ENCODE measurements at regions of chr15 and their contacts with region 1.

Region 1: DNA sequence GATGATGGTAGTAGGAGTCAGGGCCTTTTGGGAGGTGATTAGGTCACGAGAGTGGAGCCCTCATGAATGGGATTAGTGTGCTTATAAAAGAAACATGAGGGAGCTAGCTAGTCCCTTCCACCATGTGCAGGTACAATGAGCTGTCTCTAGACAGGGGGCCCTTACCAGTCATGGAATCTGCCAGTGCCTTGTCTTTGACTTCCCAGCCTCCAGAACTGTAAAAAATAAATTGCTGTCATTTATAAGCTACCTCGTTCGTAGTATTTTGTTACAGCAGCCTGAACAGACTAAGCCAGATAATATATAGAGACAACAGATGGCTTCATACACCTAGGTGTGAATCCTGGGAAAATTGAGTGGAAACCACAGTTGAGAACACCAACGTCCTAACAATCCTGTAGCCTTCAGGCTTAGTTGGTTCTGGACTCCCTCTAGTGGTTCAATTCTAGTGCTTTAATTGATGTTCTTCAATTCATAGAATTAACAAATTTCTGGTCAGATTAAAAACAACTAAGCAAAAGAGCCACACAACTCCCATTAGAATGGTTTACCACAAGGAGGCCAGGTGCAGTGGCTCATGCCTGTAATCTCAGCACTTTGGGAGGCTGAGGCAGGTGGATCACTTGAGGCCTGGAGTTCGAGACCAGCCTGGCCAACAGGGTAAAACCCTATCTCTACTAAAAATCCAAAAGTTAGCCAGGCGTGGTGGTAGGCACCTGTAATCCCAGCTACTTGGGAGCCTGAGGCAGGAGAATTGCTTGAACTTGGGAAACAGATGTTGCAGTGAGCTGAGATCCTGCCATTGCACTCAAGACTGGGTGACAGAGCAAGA is 21.3 kb upstream of the GATM start:
- DNase-seq: peak; percentile 89
- ATAC-seq: peak; percentile 13; the same call in 1 of the 2 replicates
- H3K4me3 ChIP-seq: no peak overlapping the region
- H3K27ac ChIP-seq: no peak overlapping the region
- H3K4me1 ChIP-seq: peaks cover 28% of the 10 kb centered on the region
- H3K27me3 ChIP-seq: no peaks in the 10 kb centered on the region
- CTCF ChIP-seq: peak; percentile 82

Region 2: GRCh38 chr15:45205192-45205591 is 194.4 kb before region 1 on chr15:
- CTCF ChIA-PET with region 1: interaction called, 5 read pairs
- POLR2A ChIA-PET with region 1: no interaction called
- intact Hi-C with region 1: loop called (anchors 1 kb)
- DNase-seq: peak; percentile 86
- ATAC-seq: peak; percentile 35
- H3K4me3 ChIP-seq: no peak overlapping the region
- H3K27ac ChIP-seq: no peak overlapping the region
- H3K4me1 ChIP-seq: no peaks in the 10 kb centered on the region
- H3K27me3 ChIP-seq: no peaks in the 10 kb centered on the region
- CTCF ChIP-seq: peak; percentile 94

Region 3: GRCh38 chr15:45307230-45307924 is 92.2 kb before region 1 on chr15:
- CTCF ChIA-PET with region 1: no interaction called
- POLR2A ChIA-PET with region 1: no interaction called
- intact Hi-C with region 1: loop called (anchors 1 kb)
- DNase-seq: peak; percentile 71
- ATAC-seq: peak; percentile 68
- H3K4me3 ChIP-seq: peak overlapping the region; percentile 42
- H3K27ac ChIP-seq: no peak overlapping the region
- H3K4me1 ChIP-seq: peaks cover 9% of the 10 kb centered on the region; the same call in 1 of the 2 replicates
- H3K27me3 ChIP-seq: 0 out of 2 replicates have a peak, but pooled peaks cover 3% of the 10 kb centered on the region
- CTCF ChIP-seq: peak; percentile 76

Region 4: DNA sequence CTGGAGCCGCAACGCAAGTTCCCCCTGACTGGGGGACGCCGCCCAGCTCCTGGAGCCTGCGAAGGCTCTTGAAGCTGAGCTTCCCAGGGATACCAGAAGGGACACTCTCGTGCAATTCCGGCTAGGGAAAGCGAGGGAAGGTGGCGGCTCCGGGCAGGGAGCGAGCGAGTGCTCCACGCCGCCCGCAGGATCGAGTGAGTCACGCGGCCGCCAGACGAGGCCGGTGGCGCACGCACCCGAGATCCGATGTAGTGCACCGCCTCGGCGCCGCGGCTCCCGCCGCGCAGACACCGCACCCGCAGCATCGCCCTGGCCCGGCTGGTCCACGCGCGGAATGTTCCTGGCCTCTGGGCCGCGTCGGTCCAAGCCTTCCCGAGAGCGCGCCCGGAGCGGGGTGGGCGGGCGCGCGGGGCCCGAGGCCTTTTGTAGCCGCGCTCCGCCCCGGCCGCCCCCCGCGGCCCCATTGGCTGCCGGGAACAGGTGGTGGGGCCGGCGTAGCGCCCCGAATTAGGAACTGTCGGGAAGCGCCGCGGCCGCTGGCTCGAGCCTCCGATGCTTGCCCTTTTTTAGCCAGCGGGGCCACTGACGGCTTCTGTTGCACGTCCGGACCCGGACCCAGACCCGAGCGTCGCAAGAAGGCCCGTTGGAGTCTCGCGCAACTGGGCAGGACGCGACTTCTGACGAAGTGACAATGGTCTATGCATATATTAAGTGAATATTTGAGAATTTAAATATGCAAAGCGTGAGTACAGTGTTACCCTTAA is 21.3 kb before region 1 on chr15 and contains the start of gene GATM:
- CTCF ChIA-PET with region 1: no interaction called
- POLR2A ChIA-PET with region 1: no interaction called
- intact Hi-C with region 1: loop called (anchors 2 kb)
- DNase-seq: peak; percentile 75
- ATAC-seq: peak; percentile 96
- H3K4me3 ChIP-seq: peak within 1 kb of the TSS; percentile 64
- H3K27ac ChIP-seq: no peak within 1 kb of the TSS
- H3K4me1 ChIP-seq: peaks cover 6% of the 10 kb centered on the region
- H3K27me3 ChIP-seq: peaks cover 22% of the 10 kb centered on the region
- CTCF ChIP-seq: peak; percentile 57
- total RNA-seq, gene GATM: 0.86 and 0.87 TPM in 2 replicates

Measured in PC-3 (cell line).